Gastrocnemius medialis (tissue), 4 donors: ENCODE measurements at regions of chr18 and their contacts with region 1.

Region 1: DNA sequence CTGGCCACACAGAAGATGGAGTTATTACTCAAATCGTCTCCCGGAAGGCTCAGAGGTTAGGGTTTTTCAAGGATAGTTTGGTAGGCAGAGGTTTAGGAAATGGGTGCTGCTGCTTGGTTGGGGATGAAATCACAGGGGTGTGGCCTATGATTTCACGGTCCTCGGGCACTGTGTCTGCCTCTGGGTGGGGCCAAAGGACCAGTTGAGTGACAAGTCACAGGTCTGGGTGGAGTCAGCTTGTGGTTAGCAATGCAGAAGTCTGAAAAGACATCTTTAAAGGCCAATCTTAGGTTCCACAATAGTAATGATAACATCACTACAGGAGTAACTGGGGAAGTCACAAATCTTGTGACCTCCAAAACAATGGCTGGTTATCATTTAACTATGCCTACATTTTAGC is 387.8 kb downstream of the ZNF521 start:
- DNase-seq: peak; percentile 35 to 59
- ATAC-seq: peak; percentile 86 to 93
- H3K4me3 ChIP-seq: no peak overlapping the region
- H3K27ac ChIP-seq: no peak overlapping the region
- H3K4me1 ChIP-seq: no peaks in the 10 kb centered on the region
- H3K27me3 ChIP-seq: no peaks in the 10 kb centered on the region
- CTCF ChIP-seq: peak in 2 of 5 experiments; percentile 41 to 48
- POLR2A ChIP-seq: no peak

Region 2: DNA sequence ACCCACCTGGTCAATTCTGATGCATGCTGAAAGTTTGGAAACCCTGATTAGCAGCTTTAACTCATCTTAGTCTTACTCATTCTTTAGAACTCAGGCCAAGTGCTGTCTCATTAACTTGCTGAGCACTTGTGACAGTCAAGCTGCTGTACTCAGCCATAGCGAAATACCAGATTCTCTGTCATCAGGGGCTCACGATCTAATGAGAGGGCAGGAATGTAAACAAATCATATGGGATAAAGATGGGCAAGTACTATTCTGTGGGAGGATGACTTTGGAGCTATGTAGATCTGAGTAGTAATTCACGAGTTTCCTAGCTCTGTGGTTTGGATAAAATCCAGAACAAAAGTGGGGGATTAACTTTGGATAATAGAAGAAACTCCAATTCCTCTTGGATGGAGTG is 127.2 kb before region 1 on chr18:
- in situ Hi-C with region 1: no loop called
- intact Hi-C with region 1: no loop called
- DNase-seq: no peak
- ATAC-seq: no peak
- H3K4me3 ChIP-seq: no peak overlapping the region
- H3K27ac ChIP-seq: no peak overlapping the region
- H3K4me1 ChIP-seq: no peaks in the 10 kb centered on the region
- H3K27me3 ChIP-seq: no peaks in the 10 kb centered on the region
- CTCF ChIP-seq: no peak
- POLR2A ChIP-seq: no peak

Region 3: GRCh38 chr18:25062720-25063119 is 98.5 kb after region 1 on chr18:
- in situ Hi-C with region 1: no loop called
- intact Hi-C with region 1: loop called (anchors 2 kb)
- DNase-seq: no peak
- ATAC-seq: no peak
- H3K4me3 ChIP-seq: no peak overlapping the region
- H3K27ac ChIP-seq: no peak overlapping the region
- H3K4me1 ChIP-seq: no peaks in the 10 kb centered on the region
- H3K27me3 ChIP-seq: no peaks in the 10 kb centered on the region
- CTCF ChIP-seq: no peak
- POLR2A ChIP-seq: no peak